Colonic mucosa (tissue), 4 donors: ENCODE measurements at regions of chr4 and their contacts with region 1.

Region 1: DNA sequence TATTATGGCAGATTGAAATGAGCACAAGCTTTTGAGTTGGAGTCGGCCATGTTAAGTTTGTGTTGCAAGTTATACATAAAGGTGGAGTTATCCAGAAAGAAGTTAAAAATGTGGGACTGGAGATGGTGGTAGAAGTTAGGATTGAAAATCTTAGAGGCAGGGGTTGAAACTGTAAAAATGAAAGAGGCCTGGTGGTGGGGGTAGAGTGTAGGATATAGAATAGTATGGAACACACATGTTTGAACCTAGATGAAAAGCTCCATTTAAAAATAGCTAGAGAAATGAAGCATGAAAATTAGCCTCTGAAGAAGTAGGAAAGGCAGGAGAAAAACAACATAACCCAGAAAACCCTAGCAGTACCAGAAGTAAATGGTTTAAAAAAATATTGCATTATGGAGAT is 131.8 kb upstream of the ENPEP start:
- DNase-seq: peak; percentile 20
- H3K4me3 ChIP-seq: no peak overlapping the region
- H3K27ac ChIP-seq: no peak overlapping the region
- H3K4me1 ChIP-seq: no peaks in the 10 kb centered on the region
- H3K27me3 ChIP-seq: no peaks in the 10 kb centered on the region
- CTCF ChIP-seq: peak; percentile 28

Region 2: GRCh38 chr4:110132816-110133719 is 211.1 kb before region 1 on chr4:
- intact Hi-C with region 1: no loop called
- DNase-seq: peak; percentile 34
- H3K4me3 ChIP-seq: no peak overlapping the region
- H3K27ac ChIP-seq: peak overlapping the region; percentile 58
- H3K4me1 ChIP-seq: peaks cover 5% of the 10 kb centered on the region
- H3K27me3 ChIP-seq: no peaks in the 10 kb centered on the region
- CTCF ChIP-seq: no peak

Region 3: DNA sequence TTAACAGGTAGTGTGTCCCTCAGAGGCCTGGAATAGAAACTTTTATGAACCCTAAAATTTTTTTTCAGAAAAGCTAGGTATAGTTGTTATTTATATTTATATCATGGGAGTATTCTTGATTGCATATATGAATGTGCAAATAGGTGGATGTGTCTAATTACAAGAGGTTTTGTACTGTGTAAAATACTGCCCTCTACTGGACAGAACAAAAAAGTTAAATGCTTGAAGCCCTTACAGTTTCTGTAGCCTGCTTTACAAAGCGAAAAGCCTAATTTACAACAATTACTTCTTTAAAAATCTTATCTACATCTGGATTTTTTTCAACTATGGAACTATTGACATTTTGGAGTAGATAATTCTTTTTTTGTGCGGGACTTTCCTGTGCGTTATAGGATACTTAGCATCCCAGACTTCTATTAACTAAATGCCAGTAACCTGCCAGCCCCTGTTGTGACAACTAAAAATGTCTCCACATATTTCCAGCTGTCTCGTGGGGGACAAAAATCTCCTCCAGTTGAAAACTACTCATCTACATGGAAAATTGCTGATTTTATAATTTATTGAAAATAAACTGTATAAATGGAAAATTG is 166.9 kb after region 1 on chr4:
- intact Hi-C with region 1: loop called (anchors 2 kb)
- DNase-seq: no peak
- H3K4me3 ChIP-seq: no peak overlapping the region
- H3K27ac ChIP-seq: no peak overlapping the region
- H3K4me1 ChIP-seq: no peaks in the 10 kb centered on the region
- H3K27me3 ChIP-seq: no peaks in the 10 kb centered on the region
- CTCF ChIP-seq: peak; percentile 55